PC-9 (cell line): ENCODE measurements at regions of chr19 and their contacts with region 1.

Region 1: GRCh38 chr19:15640294-15640903 is at the start of gene CYP4F3:
- DNase-seq: peak; percentile 98
- H3K4me3 ChIP-seq: peak within 1 kb of the TSS; percentile 32; the same call in 1 of the 2 replicates
- H3K27ac ChIP-seq: peak within 1 kb of the TSS; percentile 95
- H3K4me1 ChIP-seq: peaks cover 48% of the 10 kb centered on the region
- H3K27me3 ChIP-seq: no peaks in the 10 kb centered on the region
- CTCF ChIP-seq: no peak
- total RNA-seq, gene CYP4F3: 57.6 and 70.7 TPM in 2 replicates

Region 2: GRCh38 chr19:15532779-15533521 is 107.4 kb before region 1 on chr19:
- CTCF ChIA-PET with region 1: no interaction called
- POLR2A ChIA-PET with region 1: no interaction called
- intact Hi-C with region 1: no loop called
- DNase-seq: peak; percentile 21 to 58
- H3K4me3 ChIP-seq: no peak overlapping the region
- H3K27ac ChIP-seq: no peak overlapping the region
- H3K4me1 ChIP-seq: peaks cover 11% of the 10 kb centered on the region
- H3K27me3 ChIP-seq: peaks cover 20% of the 10 kb centered on the region
- CTCF ChIP-seq: no peak

Region 3: DNA sequence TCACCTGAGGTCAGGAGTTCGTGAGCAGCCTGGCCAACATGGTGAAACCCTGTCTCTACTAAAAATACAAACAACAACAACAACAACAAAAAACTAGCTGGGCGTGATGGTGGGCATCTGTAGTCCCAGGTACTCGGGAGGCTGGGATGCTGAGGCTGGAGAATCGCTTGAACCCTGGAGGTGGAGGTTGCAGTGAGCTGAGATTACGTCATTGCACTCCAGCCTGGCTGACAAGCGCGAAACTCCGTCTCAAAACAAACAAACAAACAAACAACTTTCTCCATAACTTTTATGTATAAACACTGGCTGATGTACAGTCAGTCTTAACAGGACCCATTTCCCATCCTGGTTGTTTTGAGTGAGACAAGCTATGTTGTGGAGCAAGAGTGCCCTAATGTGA is 31.1 kb before region 1 on chr19:
- CTCF ChIA-PET with region 1: no interaction called
- POLR2A ChIA-PET with region 1: no interaction called
- intact Hi-C with region 1: no loop called
- DNase-seq: no peak
- H3K4me3 ChIP-seq: no peak overlapping the region
- H3K27ac ChIP-seq: no peak overlapping the region
- H3K4me1 ChIP-seq: peaks cover 18% of the 10 kb centered on the region
- H3K27me3 ChIP-seq: no peaks in the 10 kb centered on the region
- CTCF ChIP-seq: no peak

Region 4: DNA sequence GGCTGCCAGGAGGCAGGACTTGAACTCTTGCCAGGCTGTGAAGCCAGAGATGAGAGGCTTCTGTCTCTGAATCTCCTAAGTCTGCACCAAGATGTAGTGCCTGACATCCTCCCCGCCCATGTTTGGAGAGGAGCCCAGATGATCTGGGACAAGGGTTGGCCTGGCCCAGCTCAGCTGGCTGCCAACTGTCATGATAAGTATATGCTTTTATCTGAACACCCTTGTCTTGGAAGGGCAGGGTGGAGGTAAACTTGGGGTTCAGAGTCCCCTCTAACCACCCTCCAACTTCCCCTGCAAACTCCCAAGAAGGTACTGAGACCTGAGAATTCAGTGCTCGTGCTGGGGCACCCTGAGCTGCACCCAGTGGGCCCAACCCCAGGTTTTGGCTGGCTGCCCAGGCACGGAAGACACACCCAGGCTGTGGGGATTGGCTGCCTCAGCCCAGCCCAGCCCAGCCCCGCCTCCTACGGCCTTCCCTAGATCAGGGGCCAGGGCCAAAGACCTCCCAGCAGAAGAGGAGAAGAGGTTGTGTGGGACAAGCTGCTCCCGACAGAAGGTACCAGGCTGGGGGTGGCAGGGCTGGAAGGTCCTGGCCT is 32.3 kb after region 1 on chr19 and contains the start of gene CYP4F12:
- CTCF ChIA-PET with region 1: no interaction called
- POLR2A ChIA-PET with region 1: interaction called, 5 read pairs
- intact Hi-C with region 1: loop called (anchors 2 kb)
- DNase-seq: peak; percentile 82 to 92
- H3K4me3 ChIP-seq: peak within 1 kb of the TSS; percentile 13; the same call in 1 of the 2 replicates
- H3K27ac ChIP-seq: peak within 1 kb of the TSS; percentile 63
- H3K4me1 ChIP-seq: peaks cover 14% of the 10 kb centered on the region
- H3K27me3 ChIP-seq: no peaks in the 10 kb centered on the region
- CTCF ChIP-seq: no peak
- total RNA-seq, gene CYP4F12: 5.7 and 8.1 TPM in 2 replicates

Region 5: DNA sequence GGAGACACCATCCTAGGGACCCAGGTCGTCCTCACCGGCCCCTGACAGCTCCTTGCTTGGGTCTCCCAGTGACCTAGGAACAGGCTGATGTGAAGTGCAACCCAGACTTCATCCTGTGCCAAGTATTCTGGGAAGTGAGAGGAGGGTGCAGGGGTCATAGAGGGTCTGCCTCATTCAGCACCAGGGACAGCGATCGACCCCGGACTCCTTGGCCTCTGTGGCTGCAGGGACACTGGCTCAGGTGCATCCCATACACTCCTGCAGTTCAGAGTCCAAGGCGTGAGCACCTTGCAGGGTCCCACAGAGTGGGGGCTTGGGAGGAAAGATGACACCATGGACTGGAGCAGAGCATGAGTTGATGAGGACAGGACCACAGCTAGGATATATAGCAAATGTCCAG is 77.4 kb after region 1 on chr19:
- CTCF ChIA-PET with region 1: no interaction called
- POLR2A ChIA-PET with region 1: no interaction called
- intact Hi-C with region 1: no loop called
- DNase-seq: no peak
- H3K4me3 ChIP-seq: no peak overlapping the region
- H3K27ac ChIP-seq: no peak overlapping the region
- H3K4me1 ChIP-seq: no peaks in the 10 kb centered on the region
- H3K27me3 ChIP-seq: peaks cover 58% of the 10 kb centered on the region
- CTCF ChIP-seq: no peak

Region 6: GRCh38 chr19:15995536-15995935 is 355.1 kb after region 1 on chr19:
- CTCF ChIA-PET with region 1: no interaction called
- POLR2A ChIA-PET with region 1: no interaction called
- intact Hi-C with region 1: no loop called
- DNase-seq: no peak
- H3K4me3 ChIP-seq: no peak overlapping the region
- H3K27ac ChIP-seq: no peak overlapping the region
- H3K4me1 ChIP-seq: no peaks in the 10 kb centered on the region
- H3K27me3 ChIP-seq: peaks cover 15% of the 10 kb centered on the region; the same call in 1 of the 2 replicates
- CTCF ChIP-seq: no peak